Body of pancreas (tissue), 4 donors: ENCODE measurements at regions of chr14 and their contacts with region 1.

Region 1: GRCh38 chr14:65961004-65961403 is 525.2 kb upstream of the CCDC196 start:
- DNase-seq: peak; percentile 20 to 47 (median 36)
- ATAC-seq: no peak
- H3K4me3 ChIP-seq: no peak overlapping the region
- H3K27ac ChIP-seq: no peak overlapping the region
- H3K4me1 ChIP-seq: no peaks in the 10 kb centered on the region
- H3K27me3 ChIP-seq: no peaks in the 10 kb centered on the region
- CTCF ChIP-seq: peak in 6 of 7 experiments; percentile 18 to 37 (median 31)
- POLR2A ChIP-seq: no peak

Region 2: GRCh38 chr14:65164068-65164824 is 796.8 kb before region 1 on chr14:
- intact Hi-C with region 1: loop called (anchors 5 kb)
- DNase-seq: peak; percentile 21 to 49 (median 30)
- ATAC-seq: peak; percentile 56
- H3K4me3 ChIP-seq: no peak overlapping the region
- H3K27ac ChIP-seq: no peak overlapping the region
- H3K4me1 ChIP-seq: no peaks in the 10 kb centered on the region
- H3K27me3 ChIP-seq: no peaks in the 10 kb centered on the region
- CTCF ChIP-seq: peak in 6 of 7 experiments; percentile 52 to 81 (median 65)
- POLR2A ChIP-seq: no peak